ENCODE measurements at regions of chr14 and their contacts with region 1.

Region 1: DNA sequence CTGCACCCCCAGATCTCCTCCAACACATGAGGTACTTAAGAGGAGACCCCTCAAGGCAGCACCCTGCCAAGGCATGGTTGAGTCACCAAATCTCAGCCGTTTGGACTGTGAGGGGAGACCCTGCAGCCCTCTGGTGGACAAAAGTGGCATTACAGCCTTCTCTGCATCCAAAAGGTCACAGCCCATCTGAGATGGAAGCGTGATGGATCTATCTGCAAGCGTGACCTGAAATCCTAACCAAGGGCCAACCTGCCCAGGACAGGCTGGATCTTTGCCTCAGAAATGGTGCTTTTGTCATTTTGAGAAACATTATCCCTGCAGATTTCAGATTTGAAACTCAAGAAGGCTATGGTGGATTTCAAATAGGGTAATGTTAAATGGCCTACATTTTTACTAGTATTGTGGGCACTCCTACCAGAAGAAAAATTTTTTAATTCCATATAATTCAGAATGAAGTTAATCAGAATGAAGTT is 23.7 kb upstream of the DHRS4 start:
- DNase-seq: peak; percentile 25
- ATAC-seq: peak; percentile 99
- H3K4me3 ChIP-seq: no peak overlapping the region
- H3K27ac ChIP-seq: no peak overlapping the region
- H3K4me1 ChIP-seq: no peaks in the 10 kb centered on the region
- H3K27me3 ChIP-seq: no peaks in the 10 kb centered on the region; a peak in 1 of 4 replicates
- CTCF ChIP-seq: peak; percentile 84 to 97 (median 96)
- EP300 ChIP-seq: no peak
- POLR2A ChIP-seq: no peak
- RAD21 ChIP-seq: peak; percentile 80

Region 2: GRCh38 chr14:23665375-23666192 is 264.3 kb before region 1 on chr14:
- CTCF ChIA-PET with region 1: interaction called, 8 read pairs
- POLR2A ChIA-PET with region 1: no interaction called
- RAD21 ChIA-PET with region 1: interaction called, 3 read pairs
- SMC1A ChIA-PET with region 1: interaction called, 6 read pairs
- in situ Hi-C with region 1: no loop called
- intact Hi-C with region 1: loop called (anchors 10 kb)
- DNase-seq: no peak
- ATAC-seq: peak; percentile 85
- H3K4me3 ChIP-seq: no peak overlapping the region
- H3K27ac ChIP-seq: no peak overlapping the region
- H3K4me1 ChIP-seq: no peaks in the 10 kb centered on the region
- H3K27me3 ChIP-seq: no peaks in the 10 kb centered on the region; a peak in 1 of 4 replicates
- CTCF ChIP-seq: peak; percentile 55 to 76 (median 69)
- EP300 ChIP-seq: no peak
- POLR2A ChIP-seq: no peak
- RAD21 ChIP-seq: peak; percentile 66

Region 3: DNA sequence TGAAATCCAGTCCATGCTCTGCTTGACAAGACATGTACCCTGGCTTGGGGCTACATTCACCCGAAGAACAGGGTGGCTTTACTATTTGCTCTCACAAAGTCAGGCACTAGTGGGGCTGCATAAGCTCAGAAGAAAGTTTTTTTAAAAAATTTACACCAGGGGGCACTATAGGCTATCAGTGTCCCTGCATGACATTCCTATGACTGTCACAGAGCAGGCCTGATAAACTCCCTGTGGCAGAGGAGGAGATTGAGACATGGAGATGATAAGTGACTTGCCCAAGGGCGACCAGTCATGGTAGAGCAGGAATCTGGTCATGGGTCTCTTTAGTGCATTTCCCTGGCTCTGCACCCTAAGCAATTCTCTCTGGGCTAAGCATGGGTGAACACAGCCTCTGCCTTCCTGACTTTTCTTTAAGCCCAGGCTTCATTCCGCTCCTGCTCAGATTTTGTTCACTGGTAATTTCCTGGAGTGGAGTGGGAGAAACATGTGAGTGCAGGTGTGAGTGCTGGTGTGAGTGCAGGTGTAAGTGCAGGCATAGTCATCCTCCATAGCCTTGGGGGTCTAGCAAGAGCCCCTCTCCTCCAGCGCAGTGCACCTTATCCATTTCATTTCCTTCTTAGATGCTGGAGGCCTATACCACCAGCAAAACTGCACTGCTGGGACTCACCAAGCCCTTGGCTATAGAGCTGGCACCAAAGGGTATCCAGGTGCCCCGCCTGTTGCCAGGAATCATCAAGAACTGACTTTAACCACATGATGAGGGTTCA is 202.1 kb before region 1 on chr14:
- CTCF ChIA-PET with region 1: no interaction called
- POLR2A ChIA-PET with region 1: no interaction called
- RAD21 ChIA-PET with region 1: no interaction called
- SMC1A ChIA-PET with region 1: no interaction called
- in situ Hi-C with region 1: no loop called
- intact Hi-C with region 1: loop called (anchors 5 kb)
- DNase-seq: no peak
- ATAC-seq: peak; percentile 88
- H3K4me3 ChIP-seq: no peak overlapping the region
- H3K27ac ChIP-seq: no peak overlapping the region
- H3K4me1 ChIP-seq: no peaks in the 10 kb centered on the region
- H3K27me3 ChIP-seq: no peaks in the 10 kb centered on the region
- CTCF ChIP-seq: peak; percentile 22 to 24 (median 22); a peak in 3 of 6 replicates
- EP300 ChIP-seq: no peak
- POLR2A ChIP-seq: no peak
- RAD21 ChIP-seq: peak; percentile 65

Measured in GM12878 (cell line).